Mammary epithelial cell (primary cell): ENCODE measurements at regions of chr1 and their contacts with region 1.

Region 1: DNA sequence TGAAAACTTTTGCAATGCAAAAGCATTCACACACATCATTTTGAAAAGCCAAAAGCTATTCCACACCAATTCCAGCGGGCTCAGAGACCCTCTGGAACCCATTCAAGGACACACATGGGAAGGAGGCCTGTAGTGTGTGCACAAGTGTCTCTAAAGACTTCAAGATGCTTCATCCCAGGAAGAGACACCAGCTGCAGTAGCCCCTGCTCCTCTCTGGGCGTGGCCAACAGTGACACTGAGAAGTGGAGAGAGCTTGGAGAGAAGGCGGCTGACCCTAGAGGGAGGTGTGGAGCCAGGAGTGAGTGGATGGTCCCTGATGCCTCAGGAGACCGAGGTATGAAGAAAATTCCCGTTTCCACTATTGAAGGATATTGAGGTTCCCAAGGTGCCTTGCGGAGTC is 14.9 kb upstream of the TNNI1 start:
- DNase-seq: no peak
- H3K4me3 ChIP-seq: no peak overlapping the region
- H3K27ac ChIP-seq: no peak overlapping the region
- H3K4me1 ChIP-seq: peaks cover 13% of the 10 kb centered on the region
- H3K27me3 ChIP-seq: no peaks in the 10 kb centered on the region
- CTCF ChIP-seq: no peak

Region 2: GRCh38 chr1:201376464-201377374 is 59.7 kb before region 1 on chr1:
- CTCF ChIA-PET with region 1: interaction called, 11 read pairs
- dilution Hi-C with region 1: no loop called
- in situ Hi-C with region 1: no loop called
- intact Hi-C with region 1: no loop called
- DNase-seq: peak; percentile 43
- H3K4me3 ChIP-seq: no peak overlapping the region
- H3K27ac ChIP-seq: no peak overlapping the region
- H3K4me1 ChIP-seq: no peaks in the 10 kb centered on the region
- H3K27me3 ChIP-seq: no peaks in the 10 kb centered on the region
- CTCF ChIP-seq: peak in 1 of 2 donors; percentile 33

Region 3: DNA sequence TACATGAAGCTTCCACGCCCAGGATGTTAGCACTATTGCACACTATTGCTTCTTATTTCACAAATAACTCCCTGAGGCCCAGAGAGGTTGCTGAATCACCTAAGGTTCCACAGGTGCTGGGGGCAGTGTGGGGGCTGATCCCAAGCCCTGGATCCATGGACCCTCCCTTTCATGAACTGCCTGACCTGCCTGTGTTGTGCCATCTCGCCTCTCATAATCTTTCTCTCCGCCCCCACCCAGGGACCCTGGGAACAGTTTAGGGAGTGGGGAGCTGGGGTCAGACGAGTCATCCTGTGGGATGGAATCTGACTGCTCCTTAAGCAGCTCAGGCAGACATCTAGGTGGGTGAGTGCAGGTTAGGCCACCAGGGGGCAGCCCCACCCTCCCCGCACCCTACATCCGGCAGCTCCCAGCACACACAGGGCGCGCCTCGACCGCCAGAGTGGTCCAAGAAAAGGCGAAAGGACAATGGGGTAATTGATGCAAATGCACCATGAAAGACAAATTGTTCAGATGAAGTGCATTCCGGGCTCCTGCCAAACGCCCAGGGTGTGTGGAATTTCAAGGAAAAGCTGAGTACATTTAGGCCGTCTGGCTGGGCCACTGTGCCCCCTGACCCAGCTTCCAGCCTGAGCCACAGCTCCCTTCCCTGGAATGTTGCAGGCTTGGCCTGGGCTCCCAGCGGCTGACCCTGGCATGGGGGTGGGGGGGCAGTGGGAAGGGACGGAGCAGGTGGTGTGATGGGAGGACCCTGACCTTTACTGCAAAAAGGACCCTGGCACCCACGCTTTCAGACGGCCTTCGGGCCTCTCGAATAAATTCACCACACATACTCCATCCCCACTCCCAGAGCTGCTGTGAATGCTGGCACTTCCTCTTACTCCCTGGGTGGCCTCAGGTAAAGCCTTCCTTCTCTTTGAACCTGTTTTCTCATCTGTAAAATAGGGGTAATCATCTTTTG is 11.8 kb after region 1 on chr1:
- CTCF ChIA-PET with region 1: interaction called, 9 read pairs
- dilution Hi-C with region 1: no loop called
- in situ Hi-C with region 1: no loop called
- intact Hi-C with region 1: loop called (anchors 1 kb)
- DNase-seq: peak; percentile 84
- H3K4me3 ChIP-seq: no peak overlapping the region
- H3K27ac ChIP-seq: peak overlapping the region; percentile 59
- H3K4me1 ChIP-seq: peaks cover 41% of the 10 kb centered on the region
- H3K27me3 ChIP-seq: no peaks in the 10 kb centered on the region
- CTCF ChIP-seq: peak; percentile 72 to 90

Region 4: GRCh38 chr1:201468844-201469511 is 32.6 kb after region 1 on chr1 and contains the start of gene PHLDA3:
- CTCF ChIA-PET with region 1: interaction called, 9 read pairs
- dilution Hi-C with region 1: no loop called
- in situ Hi-C with region 1: no loop called
- intact Hi-C with region 1: loop called (anchors 1 kb)
- DNase-seq: peak; percentile 93
- H3K4me3 ChIP-seq: peak within 1 kb of the TSS; percentile 85 to 100 (median 97)
- H3K27ac ChIP-seq: peak within 1 kb of the TSS; percentile 91
- H3K4me1 ChIP-seq: peaks cover 41% of the 10 kb centered on the region
- H3K27me3 ChIP-seq: no peaks in the 10 kb centered on the region
- CTCF ChIP-seq: no peak
- total RNA-seq, gene PHLDA3: 132 to 205 TPM

Region 5: GRCh38 chr1:201481761-201482493 is 45.5 kb after region 1 on chr1:
- CTCF ChIA-PET with region 1: interaction called, 6 read pairs
- dilution Hi-C with region 1: loop called (anchors 5 kb)
- in situ Hi-C with region 1: no loop called
- intact Hi-C with region 1: loop called (anchors 1 kb)
- DNase-seq: peak; percentile 68
- H3K4me3 ChIP-seq: peak overlapping the region in 1 of 3 experiments; percentile 7
- H3K27ac ChIP-seq: no peak overlapping the region
- H3K4me1 ChIP-seq: peaks cover 30% of the 10 kb centered on the region
- H3K27me3 ChIP-seq: no peaks in the 10 kb centered on the region
- CTCF ChIP-seq: peak; percentile 71 to 90